K562 (cell line): ENCODE measurements at regions of chr16 and their contacts with region 1.

Region 1: DNA sequence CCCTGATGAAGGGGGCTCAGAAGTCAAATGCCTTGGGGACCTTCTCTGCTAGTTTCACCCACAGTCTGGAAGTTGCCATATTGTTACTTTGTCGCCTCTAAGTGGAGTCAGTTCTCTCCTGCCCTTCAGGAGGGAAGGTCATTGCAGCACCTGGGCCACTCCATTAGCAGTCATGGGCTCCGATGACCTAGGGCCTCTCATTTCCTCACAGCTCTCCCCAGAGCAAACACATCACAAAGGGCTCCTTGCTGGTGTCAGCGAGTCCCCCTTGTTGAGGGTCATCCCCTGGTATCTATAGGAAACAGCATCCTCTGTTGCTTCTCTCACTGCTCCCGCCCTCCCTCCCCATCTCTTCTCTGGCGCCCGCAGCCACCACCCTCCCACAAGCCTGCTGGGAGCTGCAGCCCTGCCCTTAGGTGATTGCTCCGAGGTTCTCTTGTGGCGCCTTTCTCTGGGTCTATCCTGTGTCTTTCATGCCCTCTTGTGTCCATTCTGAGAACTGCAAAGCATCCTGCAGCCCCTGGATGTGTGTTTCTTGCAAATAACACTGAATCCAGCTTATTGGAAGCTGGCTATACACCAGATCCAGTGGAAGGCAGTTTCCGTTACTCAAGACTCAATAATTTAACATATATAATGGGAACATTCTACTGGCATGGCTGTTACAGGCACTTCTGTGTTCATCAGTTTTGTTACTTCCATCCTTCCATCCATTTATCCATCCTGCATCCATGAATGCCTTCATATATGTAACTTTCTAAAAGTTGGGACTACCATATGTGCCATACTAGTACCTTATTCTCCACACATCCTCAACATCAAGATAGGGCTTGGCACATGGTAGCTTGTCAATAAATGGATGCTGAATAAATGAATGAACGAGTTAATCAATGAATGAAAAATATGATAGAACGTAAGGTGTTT is 21.2 kb downstream of the PDILT start:
- DNase-seq: peak; percentile 71 to 79 (median 74)
- ATAC-seq: peak; percentile 97
- H3K4me3 ChIP-seq: no peak overlapping the region
- H3K27ac ChIP-seq: no peak overlapping the region
- H3K4me1 ChIP-seq: no peaks in the 10 kb centered on the region
- H3K27me3 ChIP-seq: peaks cover 0 to 6% of the 10 kb centered on the region in 2 experiments; a peak in 1 of 5 replicates
- CTCF ChIP-seq: peak; percentile 80 to 89 (median 83)
- EP300 ChIP-seq: no peak
- POLR2A ChIP-seq: no peak
- RAD21 ChIP-seq: peak; percentile 54 to 85

Region 2: GRCh38 chr16:19595043-19595767 is 788.2 kb before region 1 on chr16:
- CTCF ChIA-PET with region 1: no interaction called
- POLR2A ChIA-PET with region 1: no interaction called
- in situ Hi-C with region 1: loop called (anchors 10 kb)
- intact Hi-C with region 1: no loop called
- DNase-seq: no peak
- ATAC-seq: no peak
- H3K4me3 ChIP-seq: no peak overlapping the region
- H3K27ac ChIP-seq: no peak overlapping the region
- H3K4me1 ChIP-seq: no peaks in the 10 kb centered on the region
- H3K27me3 ChIP-seq: no peaks in the 10 kb centered on the region
- CTCF ChIP-seq: no peak
- EP300 ChIP-seq: no peak
- POLR2A ChIP-seq: no peak
- RAD21 ChIP-seq: no peak

Region 3: GRCh38 chr16:19898924-19899604 is 484.3 kb before region 1 on chr16:
- CTCF ChIA-PET with region 1: interaction called, 7 read pairs
- POLR2A ChIA-PET with region 1: no interaction called
- in situ Hi-C with region 1: loop called (anchors 5 kb)
- intact Hi-C with region 1: loop called (anchors 2 kb)
- DNase-seq: peak; percentile 59 to 72 (median 60)
- ATAC-seq: peak; percentile 87
- H3K4me3 ChIP-seq: no peak overlapping the region
- H3K27ac ChIP-seq: no peak overlapping the region
- H3K4me1 ChIP-seq: no peaks in the 10 kb centered on the region
- H3K27me3 ChIP-seq: peaks cover 0 to 32% of the 10 kb centered on the region in 2 experiments; a peak in 3 of 5 replicates
- CTCF ChIP-seq: peak; percentile 67 to 88 (median 85)
- EP300 ChIP-seq: no peak
- POLR2A ChIP-seq: no peak
- RAD21 ChIP-seq: peak; percentile 60 to 77

Region 4: GRCh38 chr16:19907161-19907992 is 476.0 kb before region 1 on chr16:
- CTCF ChIA-PET with region 1: interaction called, 12 read pairs
- POLR2A ChIA-PET with region 1: interaction called, 4 read pairs
- in situ Hi-C with region 1: no loop called
- intact Hi-C with region 1: loop called (anchors 2 kb)
- DNase-seq: peak; percentile 78 to 84 (median 82)
- ATAC-seq: peak; percentile 100
- H3K4me3 ChIP-seq: no peak overlapping the region
- H3K27ac ChIP-seq: no peak overlapping the region
- H3K4me1 ChIP-seq: no peaks in the 10 kb centered on the region
- H3K27me3 ChIP-seq: peaks cover 0 to 19% of the 10 kb centered on the region in 2 experiments; a peak in 4 of 5 replicates
- CTCF ChIP-seq: peak; percentile 97 to 99 (median 98)
- EP300 ChIP-seq: 0 out of 2 replicates have a peak, but pooled peaks have one; percentile 7
- POLR2A ChIP-seq: no peak
- RAD21 ChIP-seq: peak; percentile 80 to 91

Region 5: DNA sequence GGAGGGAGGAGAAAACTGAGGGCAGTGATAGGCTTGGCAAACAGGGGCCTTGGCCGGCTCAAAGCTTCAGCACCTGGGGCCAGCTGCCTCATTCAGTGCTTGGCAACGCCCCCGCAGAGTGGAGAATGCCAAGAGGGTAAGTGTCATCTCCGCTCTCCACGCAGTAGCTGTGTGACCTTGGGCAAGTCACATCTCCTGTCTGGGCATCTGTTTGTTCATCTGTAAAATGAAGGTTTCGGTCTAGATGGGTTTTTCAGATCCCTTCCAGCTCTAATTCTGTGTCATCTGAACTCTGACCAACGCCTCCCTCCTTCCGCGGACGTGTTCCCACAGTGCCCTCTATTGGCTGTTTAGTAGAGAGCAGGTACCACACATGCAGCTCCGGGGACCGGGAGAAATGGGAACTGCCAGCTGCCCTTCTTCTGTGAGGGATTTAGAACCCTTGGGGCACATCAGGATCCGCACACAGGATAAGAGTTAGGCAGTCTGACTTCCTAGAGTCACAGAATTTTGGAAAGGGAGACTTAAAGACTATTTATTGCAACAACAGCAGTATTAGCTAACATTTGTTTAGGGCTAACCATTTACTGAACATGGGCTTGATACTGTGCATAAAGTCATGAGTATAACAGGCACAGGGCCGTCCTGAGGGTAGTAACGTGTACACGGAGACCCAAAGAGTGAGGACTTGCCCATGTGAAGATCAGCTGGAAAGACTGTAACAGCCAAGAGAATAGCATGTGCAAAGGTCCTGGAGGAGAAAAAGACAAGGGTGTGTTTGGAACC is 82.9 kb before region 1 on chr16:
- CTCF ChIA-PET with region 1: interaction called, 3 read pairs
- POLR2A ChIA-PET with region 1: no interaction called
- in situ Hi-C with region 1: no loop called
- intact Hi-C with region 1: loop called (anchors 2 kb)
- DNase-seq: peak; percentile 68 to 74 (median 69)
- ATAC-seq: peak; percentile 91
- H3K4me3 ChIP-seq: no peak overlapping the region
- H3K27ac ChIP-seq: no peak overlapping the region
- H3K4me1 ChIP-seq: peaks cover 2 to 11% of the 10 kb centered on the region in 2 experiments; a peak in 3 of 5 replicates
- H3K27me3 ChIP-seq: no peaks in the 10 kb centered on the region
- CTCF ChIP-seq: peak; percentile 84 to 90 (median 89)
- EP300 ChIP-seq: no peak
- POLR2A ChIP-seq: no peak
- RAD21 ChIP-seq: peak; percentile 51 to 81

Region 6: DNA sequence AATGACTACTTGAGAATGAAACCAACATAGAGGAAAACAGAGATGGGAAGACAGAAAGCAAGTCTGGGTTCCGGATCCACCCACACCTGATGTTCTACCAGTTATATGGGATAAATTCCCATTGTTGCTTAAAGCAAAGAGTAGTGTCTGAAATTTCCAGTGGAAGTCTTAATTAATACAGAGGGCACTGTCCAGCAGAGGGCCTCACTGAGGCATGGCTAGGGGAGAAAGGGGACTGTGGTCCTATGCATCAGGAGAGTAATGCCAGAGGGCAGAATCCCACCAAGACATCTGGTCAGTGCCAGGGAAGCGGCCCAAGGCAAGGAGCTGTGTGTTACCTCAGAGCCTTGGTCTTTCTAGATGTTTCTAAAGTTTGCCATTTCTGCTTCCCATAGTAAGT is 23.4 kb before region 1 on chr16:
- CTCF ChIA-PET with region 1: no interaction called
- POLR2A ChIA-PET with region 1: no interaction called
- in situ Hi-C with region 1: no loop called
- intact Hi-C with region 1: no loop called
- DNase-seq: peak; percentile 20 to 41 (median 30)
- ATAC-seq: peak; percentile 57; the same call in 1 of the 3 replicates
- H3K4me3 ChIP-seq: no peak overlapping the region
- H3K27ac ChIP-seq: no peak overlapping the region
- H3K4me1 ChIP-seq: no peaks in the 10 kb centered on the region
- H3K27me3 ChIP-seq: peaks cover 0 to 7% of the 10 kb centered on the region in 2 experiments; a peak in 2 of 5 replicates
- CTCF ChIP-seq: peak; percentile 46 to 65 (median 54)
- EP300 ChIP-seq: no peak
- POLR2A ChIP-seq: no peak
- RAD21 ChIP-seq: peak in 1 of 2 experiments; percentile 46; a peak in 2 of 4 replicates